Ovary (tissue), 10 donors: ENCODE measurements at regions of chr12 and their contacts with region 1.

Region 1: DNA sequence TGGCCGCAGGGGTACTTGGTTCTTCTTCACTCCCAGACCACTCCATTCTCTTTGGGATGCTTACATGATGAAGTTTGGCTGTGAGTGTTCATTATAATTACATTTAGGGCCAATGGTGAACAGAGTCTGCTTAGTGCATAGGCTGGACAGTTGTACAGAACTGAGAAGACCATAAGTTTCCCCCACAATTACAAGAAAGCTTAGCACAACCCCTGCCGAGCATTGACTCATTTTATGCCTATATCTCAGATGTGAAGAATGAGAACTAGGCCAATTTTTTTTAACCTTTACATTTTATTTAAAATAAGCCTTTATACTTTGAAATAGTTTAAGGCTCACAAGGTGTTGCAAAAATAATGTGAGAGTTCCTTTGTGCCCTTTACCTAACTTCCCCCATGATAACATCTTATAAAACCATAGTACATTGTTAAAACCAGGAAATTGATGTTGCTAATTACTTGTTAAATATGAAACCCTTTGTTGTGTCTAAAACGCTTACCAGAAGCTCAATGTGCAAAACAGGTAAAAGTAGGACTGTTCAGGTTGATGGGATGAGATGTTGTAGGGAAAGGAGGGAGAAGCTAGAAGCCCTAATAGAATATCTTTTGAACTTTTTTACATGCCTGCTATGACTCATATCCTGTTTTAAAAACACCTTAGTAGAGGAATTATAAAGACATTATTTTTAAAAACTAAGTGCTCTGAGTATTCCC is 47.2 kb downstream of the ALDH1L2 start:
- DNase-seq: no peak
- H3K4me3 ChIP-seq: no peak overlapping the region
- H3K27ac ChIP-seq: no peak overlapping the region
- H3K4me1 ChIP-seq: no peaks in the 10 kb centered on the region
- H3K27me3 ChIP-seq: no peaks in the 10 kb centered on the region
- CTCF ChIP-seq: no peak
- EP300 ChIP-seq: no peak
- POLR2A ChIP-seq: no peak

Region 2: DNA sequence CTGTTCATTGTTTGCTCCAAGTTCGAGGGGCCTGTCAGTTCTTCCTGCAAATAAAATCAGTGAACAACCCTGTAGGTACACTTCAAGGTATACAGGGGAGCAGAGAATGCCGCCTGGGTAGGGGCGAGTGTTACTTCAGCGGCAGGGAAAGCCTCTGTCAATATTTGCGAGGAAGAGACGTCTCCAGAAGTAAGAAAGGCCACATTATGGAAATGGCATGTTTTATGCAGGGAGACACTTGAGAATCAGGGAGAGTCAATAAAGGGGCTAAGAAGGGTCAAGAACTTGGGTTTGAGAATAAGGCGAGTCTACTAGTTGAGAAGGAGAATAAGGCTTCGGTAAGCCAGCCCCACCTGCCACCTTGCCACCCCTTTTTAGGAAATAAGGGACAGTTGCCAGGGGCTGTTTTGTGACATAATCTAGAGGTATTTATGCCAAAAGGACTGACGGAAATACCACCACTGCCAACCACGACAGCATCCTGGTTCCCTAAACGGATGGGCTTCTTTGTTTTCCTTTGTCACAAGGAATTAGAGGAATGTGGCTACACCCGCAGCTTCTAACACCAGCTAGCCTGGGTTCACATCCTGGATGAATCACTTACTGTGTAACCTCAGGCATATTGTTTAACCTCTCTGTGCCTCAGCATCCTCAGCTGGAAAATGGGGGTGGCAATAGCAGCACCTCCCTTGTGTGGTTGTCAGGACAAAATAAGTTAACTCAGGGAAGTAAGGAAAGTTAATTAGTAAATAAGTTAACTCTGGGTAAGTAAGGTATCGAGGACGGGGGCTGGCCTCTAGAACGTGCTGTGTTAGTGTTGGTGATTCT is 665.8 kb before region 1 on chr12:
- intact Hi-C with region 1: loop called in 1 of 4 experiments (anchors 10 kb)
- DNase-seq: no peak
- H3K4me3 ChIP-seq: no peak overlapping the region
- H3K27ac ChIP-seq: no peak overlapping the region
- H3K4me1 ChIP-seq: no peaks in the 10 kb centered on the region
- H3K27me3 ChIP-seq: no peaks in the 10 kb centered on the region
- CTCF ChIP-seq: no peak
- EP300 ChIP-seq: no peak
- POLR2A ChIP-seq: no peak

Region 3: GRCh38 chr12:104877123-104877705 is 159.9 kb before region 1 on chr12:
- intact Hi-C with region 1: no loop called
- DNase-seq: peak; percentile 37 to 64 (median 44)
- H3K4me3 ChIP-seq: no peak overlapping the region
- H3K27ac ChIP-seq: no peak overlapping the region
- H3K4me1 ChIP-seq: no peaks in the 10 kb centered on the region
- H3K27me3 ChIP-seq: no peaks in the 10 kb centered on the region
- CTCF ChIP-seq: peak; percentile 52 to 90 (median 77)
- EP300 ChIP-seq: no peak
- POLR2A ChIP-seq: no peak

Region 4: DNA sequence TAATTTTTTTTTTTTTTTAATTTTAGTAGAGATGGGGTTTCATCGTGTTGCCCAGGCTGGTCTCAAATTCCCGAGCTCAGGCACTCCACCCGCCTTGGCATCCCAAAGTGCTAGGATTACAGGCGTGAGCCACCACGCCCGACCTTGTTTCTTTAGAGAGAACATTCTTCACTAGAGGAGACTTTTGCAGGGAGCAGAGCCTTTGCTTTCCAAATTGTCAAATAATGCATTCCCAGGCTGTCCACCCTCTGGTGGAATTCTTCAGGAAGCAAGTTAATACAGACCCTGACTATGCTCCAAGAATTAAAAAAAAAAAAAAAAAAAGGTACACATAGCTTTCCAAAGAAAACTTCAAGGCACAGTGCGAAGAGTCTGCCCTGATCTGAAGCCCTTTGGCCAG is 40.3 kb after region 1 on chr12:
- intact Hi-C with region 1: loop called in 1 of 4 experiments (anchors 1 kb)
- DNase-seq: no peak
- H3K4me3 ChIP-seq: no peak overlapping the region
- H3K27ac ChIP-seq: no peak overlapping the region
- H3K4me1 ChIP-seq: no peaks in the 10 kb centered on the region
- H3K27me3 ChIP-seq: no peaks in the 10 kb centered on the region
- CTCF ChIP-seq: no peak
- EP300 ChIP-seq: no peak
- POLR2A ChIP-seq: no peak

Region 5: GRCh38 chr12:105107494-105108371 is 70.6 kb after region 1 on chr12 and contains the start of gene WASHC4:
- intact Hi-C with region 1: no loop called
- DNase-seq: peak; percentile 91 to 94 (median 93)
- H3K4me3 ChIP-seq: peak within 1 kb of the TSS; percentile 98
- H3K27ac ChIP-seq: peak within 1 kb of the TSS; percentile 79 to 88
- H3K4me1 ChIP-seq: no peaks in the 10 kb centered on the region
- H3K27me3 ChIP-seq: no peaks in the 10 kb centered on the region
- CTCF ChIP-seq: no peak
- EP300 ChIP-seq: no peak
- POLR2A ChIP-seq: peak; percentile 92
- total RNA-seq, gene WASHC4: 32.1 to 55.8 (median 46.5) TPM

Region 6: DNA sequence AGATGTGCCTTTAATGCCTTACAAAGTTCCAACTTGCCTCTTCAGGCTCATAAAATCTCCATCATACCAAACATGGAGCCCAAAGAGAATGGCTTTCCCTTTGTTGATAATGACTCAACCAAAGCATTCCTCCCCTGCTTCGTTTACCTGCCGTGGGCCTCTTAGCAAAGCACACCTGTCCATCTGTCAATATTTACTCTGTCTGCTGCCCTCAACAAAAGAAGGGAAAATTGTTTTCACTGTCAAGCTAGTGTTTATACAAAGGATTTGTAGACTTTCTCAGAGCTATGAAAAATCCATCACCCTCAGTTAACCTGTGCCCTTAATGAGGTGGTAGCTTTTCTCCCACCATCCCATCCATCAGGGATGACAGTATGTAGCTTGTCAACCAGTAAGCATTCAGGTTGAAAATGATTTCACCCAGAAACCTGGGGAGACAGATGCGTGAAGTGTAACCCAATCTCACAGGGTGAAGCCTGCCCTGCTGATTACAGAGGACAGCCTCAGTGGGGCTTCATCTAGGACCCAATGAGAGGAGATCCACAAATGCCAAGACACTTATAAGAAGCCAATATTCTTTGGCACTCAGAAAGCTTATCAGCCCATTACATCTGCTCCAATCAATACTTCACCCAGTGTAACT is 823.6 kb after region 1 on chr12:
- intact Hi-C with region 1: no loop called
- DNase-seq: no peak
- H3K4me3 ChIP-seq: no peak overlapping the region
- H3K27ac ChIP-seq: no peak overlapping the region
- H3K4me1 ChIP-seq: no peaks in the 10 kb centered on the region
- H3K27me3 ChIP-seq: no peaks in the 10 kb centered on the region
- CTCF ChIP-seq: no peak
- EP300 ChIP-seq: no peak
- POLR2A ChIP-seq: no peak